CD8-positive, alpha-beta memory T cell (primary cell): ENCODE measurements at regions of chr12 and their contacts with region 1.

Region 1: DNA sequence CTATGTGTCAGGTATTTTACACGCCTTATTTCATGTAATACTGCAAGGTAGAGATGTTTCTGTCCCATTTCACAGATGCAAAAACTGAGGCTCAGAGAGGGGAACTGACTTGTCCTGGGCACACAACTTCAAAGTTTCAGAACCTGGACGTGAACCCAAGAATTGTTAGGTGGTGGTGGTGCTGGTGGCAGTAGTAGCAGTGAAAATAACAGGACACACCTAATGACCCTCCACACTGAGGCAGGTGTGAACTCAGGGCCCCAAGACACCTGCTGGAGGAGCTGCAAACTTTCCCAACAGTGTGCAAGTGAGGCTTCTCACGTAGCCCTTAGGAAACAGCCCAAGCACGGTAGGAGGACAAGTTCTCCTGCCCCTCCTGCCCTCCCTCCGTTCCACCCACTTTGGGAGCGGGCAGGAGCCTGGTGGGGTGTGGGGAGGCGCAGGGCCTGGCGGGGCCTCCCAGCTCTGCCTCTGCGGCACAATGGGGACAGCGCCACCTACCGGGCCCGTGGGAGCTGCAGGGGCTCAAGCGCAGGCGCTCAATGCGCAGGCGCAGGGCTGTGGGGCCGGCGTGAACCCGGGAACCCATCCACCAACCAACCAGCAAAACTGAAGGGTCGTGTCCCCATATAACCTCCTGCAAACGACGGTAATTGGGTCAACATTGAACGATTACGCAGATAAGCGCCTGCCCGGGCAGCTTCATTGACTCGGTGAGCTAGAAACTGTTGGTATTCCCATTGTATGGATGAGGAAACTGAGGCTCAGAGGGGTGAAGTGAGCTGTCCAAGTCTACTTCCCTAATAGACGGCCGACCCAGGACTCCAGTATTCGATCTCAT is 12.0 kb upstream of the TRPV4 start:
- DNase-seq: peak; percentile 77 to 89 (median 86)
- H3K4me3 ChIP-seq: peak overlapping the region; percentile 32
- H3K4me3 Mint-ChIP-seq: peak overlapping the region in 6 of 7 donors; percentile 13 to 58 (median 20)
- H3K27ac ChIP-seq: no peak overlapping the region
- H3K27ac Mint-ChIP-seq: peak overlapping the region in 3 of 8 donors; percentile 10 to 60 (median 29)
- H3K4me1 ChIP-seq: peaks cover 3% of the 10 kb centered on the region
- H3K4me1 Mint-ChIP-seq: peaks cover 5 to 12% (median 7%) of the 10 kb centered on the region in 3 donors
- H3K27me3 ChIP-seq: no peaks in the 10 kb centered on the region
- H3K27me3 Mint-ChIP-seq: peaks cover 0 to 3% of the 10 kb centered on the region in 2 donors

Region 2: GRCh38 chr12:109597795-109598427 is 247.3 kb before region 1 on chr12:
- CTCF ChIA-PET with region 1: interaction called, 10 read pairs
- POLR2A ChIA-PET with region 1: no interaction called
- DNase-seq: peak; percentile 43 to 72 (median 50)
- H3K4me3 ChIP-seq: no peak overlapping the region
- H3K4me3 Mint-ChIP-seq: peak overlapping the region in 1 of 7 donors; percentile 20
- H3K27ac ChIP-seq: no peak overlapping the region
- H3K27ac Mint-ChIP-seq: peak overlapping the region in 2 of 8 donors; percentile 41 to 52
- H3K4me1 ChIP-seq: peaks cover 11% of the 10 kb centered on the region
- H3K4me1 Mint-ChIP-seq: peaks cover 21 to 30% (median 28%) of the 10 kb centered on the region in 3 donors
- H3K27me3 ChIP-seq: no peaks in the 10 kb centered on the region
- H3K27me3 Mint-ChIP-seq: peaks cover 0 to 1% of the 10 kb centered on the region in 2 donors

Region 3: GRCh38 chr12:109804820-109805761 is 40.1 kb before region 1 on chr12:
- CTCF ChIA-PET with region 1: interaction called, 38 read pairs
- POLR2A ChIA-PET with region 1: no interaction called
- DNase-seq: peak; percentile 53 to 82 (median 61)
- H3K4me3 ChIP-seq: no peak overlapping the region
- H3K4me3 Mint-ChIP-seq: no peak overlapping the region
- H3K27ac ChIP-seq: no peak overlapping the region
- H3K27ac Mint-ChIP-seq: peak overlapping the region in 1 of 8 donors; percentile 73
- H3K4me1 ChIP-seq: no peaks in the 10 kb centered on the region
- H3K4me1 Mint-ChIP-seq: peaks cover 0 to 3% (median 2%) of the 10 kb centered on the region in 3 donors
- H3K27me3 ChIP-seq: no peaks in the 10 kb centered on the region
- H3K27me3 Mint-ChIP-seq: no peaks in the 10 kb centered on the region

Region 4: DNA sequence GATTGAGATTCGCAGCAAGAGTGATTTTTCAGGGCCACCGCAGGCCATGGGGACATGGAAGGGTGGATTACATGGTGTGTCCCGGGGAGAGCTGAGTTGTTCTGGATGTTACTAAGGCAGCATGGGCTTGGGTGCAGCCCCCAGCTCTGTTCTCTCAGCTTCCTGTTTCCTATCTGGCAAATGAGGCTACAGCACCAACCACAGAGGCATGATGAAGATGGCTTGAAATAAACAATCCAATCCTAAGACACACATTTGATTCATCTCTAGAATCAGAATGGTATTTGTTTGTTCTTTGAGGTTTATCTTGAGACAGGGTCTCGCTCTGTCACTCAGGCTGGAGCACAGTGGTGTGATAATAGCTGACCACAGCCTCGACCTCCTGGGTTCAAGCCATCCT is 13.6 kb after region 1 on chr12:
- CTCF ChIA-PET with region 1: interaction called, 61 read pairs
- POLR2A ChIA-PET with region 1: no interaction called
- DNase-seq: no peak
- H3K4me3 ChIP-seq: no peak overlapping the region
- H3K4me3 Mint-ChIP-seq: no peak overlapping the region
- H3K27ac ChIP-seq: no peak overlapping the region
- H3K27ac Mint-ChIP-seq: peak overlapping the region in 5 of 8 donors; percentile 37 to 94 (median 79)
- H3K4me1 ChIP-seq: peaks cover 3% of the 10 kb centered on the region
- H3K4me1 Mint-ChIP-seq: peaks cover 13 to 20% (median 15%) of the 10 kb centered on the region in 3 donors
- H3K27me3 ChIP-seq: no peaks in the 10 kb centered on the region
- H3K27me3 Mint-ChIP-seq: peaks cover 0 to 2% of the 10 kb centered on the region in 2 donors

Region 5: GRCh38 chr12:109880016-109880931 is 35.1 kb after region 1 on chr12 and contains the start of gene GLTP:
- CTCF ChIA-PET with region 1: interaction called, 17 read pairs
- POLR2A ChIA-PET with region 1: interaction called, 3 read pairs
- DNase-seq: peak; percentile 86 to 94 (median 91)
- H3K4me3 ChIP-seq: peak within 1 kb of the TSS; percentile 98
- H3K4me3 Mint-ChIP-seq: peak within 1 kb of the TSS; percentile 93 to 98 (median 96)
- H3K27ac ChIP-seq: peak within 1 kb of the TSS; percentile 85
- H3K27ac Mint-ChIP-seq: peak within 1 kb of the TSS; percentile 53 to 100 (median 98)
- H3K4me1 ChIP-seq: peaks cover 30% of the 10 kb centered on the region
- H3K4me1 Mint-ChIP-seq: peaks cover 43 to 54% (median 54%) of the 10 kb centered on the region in 3 donors
- H3K27me3 ChIP-seq: no peaks in the 10 kb centered on the region
- H3K27me3 Mint-ChIP-seq: peaks cover 0 to 2% of the 10 kb centered on the region in 2 donors
- total RNA-seq, gene GLTP: 39.3 to 42.7 TPM

Region 6: DNA sequence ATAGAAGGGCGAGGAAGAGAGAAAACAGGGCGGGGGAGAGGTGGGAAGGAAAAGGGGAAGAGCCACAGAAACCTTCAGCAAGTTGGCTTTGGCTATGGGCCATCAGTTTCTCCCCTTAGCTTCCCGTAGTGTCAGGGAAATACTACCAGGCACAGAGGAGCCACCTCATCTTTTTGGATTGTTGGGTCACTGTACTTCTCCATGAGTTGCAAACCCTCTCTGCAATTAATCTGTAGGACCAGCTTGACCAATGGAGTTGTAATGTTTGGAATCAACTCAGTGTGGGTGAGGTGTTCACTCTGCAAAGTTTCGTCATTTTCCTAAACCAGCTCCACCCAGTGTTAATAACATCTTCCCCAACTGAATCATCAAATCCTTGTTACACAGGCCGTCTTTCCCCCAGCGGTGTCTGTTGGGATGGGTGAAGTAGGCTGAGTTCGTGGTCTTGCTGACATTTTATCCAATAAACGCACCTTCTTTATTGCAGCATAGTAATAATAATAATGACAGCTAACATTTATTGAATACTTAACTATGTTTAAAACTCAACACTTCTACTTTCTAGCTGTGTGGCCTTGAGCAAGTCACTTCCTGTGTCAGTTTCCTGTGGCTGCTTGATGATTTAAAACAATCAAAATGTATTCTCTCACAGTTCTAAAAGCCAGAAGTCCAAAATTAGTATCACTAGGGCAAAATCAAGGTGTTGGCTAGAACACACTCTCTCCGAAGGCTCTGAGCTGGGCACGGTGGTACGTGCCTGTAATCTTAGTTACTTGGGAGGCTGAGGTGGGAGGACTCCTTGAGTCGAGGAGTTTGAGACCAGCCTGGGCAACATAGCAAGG is 43.2 kb after region 1 on chr12:
- CTCF ChIA-PET with region 1: interaction called, 11 read pairs
- POLR2A ChIA-PET with region 1: no interaction called
- DNase-seq: peak in 2 of 5 donors; percentile 41 to 52
- H3K4me3 ChIP-seq: peak overlapping the region; percentile 12
- H3K4me3 Mint-ChIP-seq: peak overlapping the region; percentile 12 to 91 (median 82)
- H3K27ac ChIP-seq: peak overlapping the region; percentile 71
- H3K27ac Mint-ChIP-seq: peak overlapping the region; percentile 84 to 98 (median 97)
- H3K4me1 ChIP-seq: peaks cover 41% of the 10 kb centered on the region
- H3K4me1 Mint-ChIP-seq: peaks cover 41 to 50% (median 45%) of the 10 kb centered on the region in 3 donors
- H3K27me3 ChIP-seq: no peaks in the 10 kb centered on the region
- H3K27me3 Mint-ChIP-seq: no peaks in the 10 kb centered on the region

Region 7: DNA sequence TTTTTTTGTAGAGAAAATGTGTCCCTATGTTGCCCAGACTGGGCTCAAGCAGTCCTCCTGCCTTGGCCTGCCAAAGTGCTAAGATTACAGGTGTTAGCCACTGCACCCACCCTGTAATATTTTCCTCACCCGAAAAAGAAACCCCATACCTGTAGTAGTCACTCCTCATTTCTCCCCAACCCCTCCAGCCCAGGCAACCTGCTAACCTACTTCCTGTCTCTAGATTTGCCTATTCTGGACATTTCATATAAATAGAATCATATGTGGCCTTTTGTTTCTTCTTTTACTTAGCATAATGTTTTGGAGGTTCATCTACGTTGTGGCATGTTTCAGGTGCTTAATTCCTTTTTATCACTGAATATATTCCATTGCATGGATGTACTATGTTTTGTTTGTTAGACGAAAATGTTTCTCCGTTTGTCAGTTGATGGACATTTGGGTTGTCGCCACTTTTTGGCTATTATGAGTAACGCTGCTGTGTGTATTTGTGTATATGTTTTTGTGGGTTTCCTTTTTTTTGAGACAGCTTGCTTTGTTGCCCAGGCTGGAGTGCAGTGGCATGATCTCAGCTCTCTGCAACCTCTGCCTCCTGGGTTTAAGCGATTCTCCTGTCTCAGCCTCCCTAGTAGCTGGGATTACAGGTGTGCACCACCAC is 160.2 kb after region 1 on chr12:
- CTCF ChIA-PET with region 1: no interaction called
- POLR2A ChIA-PET with region 1: no interaction called
- DNase-seq: no peak
- H3K4me3 ChIP-seq: no peak overlapping the region
- H3K4me3 Mint-ChIP-seq: peak overlapping the region; percentile 35 to 79 (median 72)
- H3K27ac ChIP-seq: no peak overlapping the region
- H3K27ac Mint-ChIP-seq: peak overlapping the region in 7 of 8 donors; percentile 38 to 91 (median 88)
- H3K4me1 ChIP-seq: peaks cover 48% of the 10 kb centered on the region
- H3K4me1 Mint-ChIP-seq: peaks cover 60 to 93% (median 92%) of the 10 kb centered on the region in 3 donors
- H3K27me3 ChIP-seq: no peaks in the 10 kb centered on the region
- H3K27me3 Mint-ChIP-seq: no peaks in the 10 kb centered on the region